PC-9 (cell line): ENCODE measurements at regions of chr22 and their contacts with region 1.

Region 1: GRCh38 chr22:45424231-45424731 is 10.8 kb downstream of the RIBC2 start:
- DNase-seq: peak; percentile 88 to 96
- H3K4me3 ChIP-seq: peak overlapping the region; percentile 9; the same call in 1 of the 2 replicates
- H3K27ac ChIP-seq: peak overlapping the region; percentile 53
- H3K4me1 ChIP-seq: peaks cover 26% of the 10 kb centered on the region
- H3K27me3 ChIP-seq: no peaks in the 10 kb centered on the region
- CTCF ChIP-seq: no peak; the same call in 1 of the 2 replicates

Region 2: DNA sequence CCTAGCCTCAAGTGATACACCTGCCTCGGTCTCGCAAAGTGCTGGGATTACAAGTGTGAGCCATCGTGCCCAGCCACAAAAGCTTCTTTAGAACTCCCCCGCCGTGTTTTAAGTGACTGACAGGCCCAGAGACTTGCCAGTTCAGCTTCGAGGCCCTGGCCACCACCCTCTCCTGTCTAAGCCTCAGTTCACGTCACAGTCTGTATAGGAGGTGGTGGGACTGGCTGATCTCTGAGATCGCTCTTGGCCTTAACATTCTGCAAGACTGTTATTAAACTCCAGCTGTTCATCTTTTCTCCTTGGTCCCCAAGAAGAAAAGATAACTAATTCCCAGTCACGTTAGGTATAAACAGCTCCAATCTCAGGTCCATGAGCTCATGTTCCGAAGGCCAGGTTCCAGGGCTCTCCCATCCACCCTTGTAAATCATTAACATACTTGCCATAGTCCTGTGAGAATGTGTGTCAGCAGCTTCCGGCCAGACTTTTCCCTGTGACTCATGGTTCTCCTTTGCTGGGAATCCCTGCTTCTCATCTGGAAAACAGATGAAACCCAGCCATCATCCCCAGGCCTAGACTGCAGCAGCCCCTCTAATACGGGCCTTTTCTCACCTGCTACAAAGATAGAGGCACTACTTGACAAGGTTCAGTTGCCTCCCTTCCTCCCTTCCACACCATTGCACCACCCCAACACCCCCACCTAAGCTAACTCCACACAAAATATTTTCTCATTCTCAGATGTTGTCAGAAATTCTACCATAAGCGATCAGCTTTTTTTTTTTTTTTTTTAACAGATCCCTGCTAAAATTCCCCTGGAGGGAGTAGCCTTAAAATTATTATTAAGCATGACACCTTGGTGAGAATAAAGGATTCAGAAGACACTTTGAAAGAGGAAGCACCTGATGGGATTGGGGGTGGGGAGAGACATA is 178.0 kb before region 1 on chr22:
- CTCF ChIA-PET with region 1: no interaction called
- POLR2A ChIA-PET with region 1: interaction called, 10 read pairs
- intact Hi-C with region 1: no loop called
- DNase-seq: peak; percentile 61 to 62
- H3K4me3 ChIP-seq: no peak overlapping the region
- H3K27ac ChIP-seq: peak overlapping the region; percentile 48
- H3K4me1 ChIP-seq: peaks cover 8% of the 10 kb centered on the region
- H3K27me3 ChIP-seq: no peaks in the 10 kb centered on the region
- CTCF ChIP-seq: no peak

Region 3: GRCh38 chr22:45413368-45414211 is 10.7 kb before region 1 on chr22 and contains the starts of genes RIBC2 and SMC1B:
- CTCF ChIA-PET with region 1: no interaction called
- POLR2A ChIA-PET with region 1: no interaction called
- intact Hi-C with region 1: no loop called
- DNase-seq: peak; percentile 78 to 81
- H3K4me3 ChIP-seq: peak within 1 kb of the TSS; percentile 73
- H3K27ac ChIP-seq: peak within 1 kb of the TSS; percentile 16; the same call in 1 of the 2 replicates
- H3K4me1 ChIP-seq: peaks cover 6% of the 10 kb centered on the region
- H3K27me3 ChIP-seq: no peaks in the 10 kb centered on the region
- CTCF ChIP-seq: no peak
- total RNA-seq, gene RIBC2: 4.0 and 11.0 TPM in 2 replicates
- total RNA-seq, gene SMC1B: 0.28 and 0.31 TPM in 2 replicates

Region 4: GRCh38 chr22:45435544-45436139 is 11.4 kb after region 1 on chr22:
- CTCF ChIA-PET with region 1: no interaction called
- POLR2A ChIA-PET with region 1: interaction called, 19 read pairs
- intact Hi-C with region 1: no loop called
- DNase-seq: peak; percentile 82 to 87
- H3K4me3 ChIP-seq: no peak overlapping the region
- H3K27ac ChIP-seq: no peak overlapping the region
- H3K4me1 ChIP-seq: peaks cover 12% of the 10 kb centered on the region
- H3K27me3 ChIP-seq: no peaks in the 10 kb centered on the region
- CTCF ChIP-seq: peak; percentile 97

Region 5: GRCh38 chr22:45516923-45517675 is 92.8 kb after region 1 on chr22:
- CTCF ChIA-PET with region 1: no interaction called
- POLR2A ChIA-PET with region 1: no interaction called
- intact Hi-C with region 1: loop called (anchors 5 kb)
- DNase-seq: peak; percentile 93 to 97
- H3K4me3 ChIP-seq: no peak overlapping the region
- H3K27ac ChIP-seq: peak overlapping the region; percentile 77
- H3K4me1 ChIP-seq: peaks cover 74% of the 10 kb centered on the region
- H3K27me3 ChIP-seq: no peaks in the 10 kb centered on the region
- CTCF ChIP-seq: no peak

Region 6: DNA sequence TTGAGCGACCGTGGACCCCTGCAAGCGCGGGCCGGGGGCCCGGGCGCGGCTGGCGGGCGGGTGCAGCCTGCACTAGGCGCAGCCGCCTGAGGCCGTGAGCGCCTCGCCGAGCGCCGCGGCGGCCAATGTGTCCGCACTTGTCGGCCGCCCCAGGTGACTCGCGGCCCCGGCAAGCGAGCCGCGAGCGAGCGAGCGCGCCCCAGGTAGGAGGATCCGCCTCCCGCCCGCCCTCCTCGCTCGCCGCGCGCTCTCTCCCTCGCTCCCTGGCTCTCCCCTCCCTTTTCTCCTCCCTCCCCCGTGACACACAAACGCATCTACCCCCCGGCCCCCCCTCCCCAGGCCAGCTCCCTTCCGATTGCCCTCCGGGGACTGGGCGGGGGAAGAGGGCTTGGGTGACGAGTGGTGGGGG is 552.7 kb after region 1 on chr22 and contains the start of gene WNT7B:
- CTCF ChIA-PET with region 1: no interaction called
- POLR2A ChIA-PET with region 1: interaction called, 16 read pairs
- intact Hi-C with region 1: no loop called
- DNase-seq: peak; percentile 79 to 86
- H3K4me3 ChIP-seq: peak within 1 kb of the TSS; percentile 99
- H3K27ac ChIP-seq: no peak within 1 kb of the TSS
- H3K4me1 ChIP-seq: peaks cover 36% of the 10 kb centered on the region
- H3K27me3 ChIP-seq: no peaks in the 10 kb centered on the region
- CTCF ChIP-seq: no peak
- total RNA-seq, gene WNT7B: 66.9 and 75.5 TPM in 2 replicates

Region 7: DNA sequence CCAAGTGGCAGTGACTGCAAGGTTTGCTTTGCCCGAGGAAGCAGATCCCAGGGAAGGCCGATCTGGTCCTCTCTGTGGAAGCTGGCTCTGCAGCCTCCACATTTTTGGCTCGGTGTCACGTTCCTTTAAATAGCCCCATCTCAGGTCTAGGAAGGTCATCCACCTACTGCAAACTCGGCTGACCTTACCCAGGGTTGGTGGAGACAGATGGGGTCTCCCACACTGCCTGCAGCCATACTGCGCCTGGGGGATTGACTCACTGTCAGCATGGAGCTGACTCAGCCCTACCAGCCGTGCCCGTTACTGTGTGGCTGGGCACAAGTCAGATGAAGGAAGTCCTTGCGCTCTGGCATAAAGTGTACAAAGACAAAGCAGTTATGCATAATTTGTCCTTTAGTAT is 809.0 kb after region 1 on chr22:
- CTCF ChIA-PET with region 1: no interaction called
- POLR2A ChIA-PET with region 1: no interaction called
- intact Hi-C with region 1: no loop called
- DNase-seq: no peak
- H3K4me3 ChIP-seq: no peak overlapping the region
- H3K27ac ChIP-seq: no peak overlapping the region
- H3K4me1 ChIP-seq: no peaks in the 10 kb centered on the region
- H3K27me3 ChIP-seq: no peaks in the 10 kb centered on the region
- CTCF ChIP-seq: no peak